GM18951 (cell line): ENCODE measurements at regions of chr14 and their contacts with region 1.

Region 1: GRCh38 chr14:80845856-80846255 is 95.7 kb downstream of the CEP128 start:
- POLR2A ChIP-seq: no peak

Region 2: GRCh38 chr14:80055667-80056496 is 790.0 kb before region 1 on chr14:
- in situ Hi-C with region 1: loop called (anchors 25 kb)
- POLR2A ChIP-seq: no peak

Region 3: DNA sequence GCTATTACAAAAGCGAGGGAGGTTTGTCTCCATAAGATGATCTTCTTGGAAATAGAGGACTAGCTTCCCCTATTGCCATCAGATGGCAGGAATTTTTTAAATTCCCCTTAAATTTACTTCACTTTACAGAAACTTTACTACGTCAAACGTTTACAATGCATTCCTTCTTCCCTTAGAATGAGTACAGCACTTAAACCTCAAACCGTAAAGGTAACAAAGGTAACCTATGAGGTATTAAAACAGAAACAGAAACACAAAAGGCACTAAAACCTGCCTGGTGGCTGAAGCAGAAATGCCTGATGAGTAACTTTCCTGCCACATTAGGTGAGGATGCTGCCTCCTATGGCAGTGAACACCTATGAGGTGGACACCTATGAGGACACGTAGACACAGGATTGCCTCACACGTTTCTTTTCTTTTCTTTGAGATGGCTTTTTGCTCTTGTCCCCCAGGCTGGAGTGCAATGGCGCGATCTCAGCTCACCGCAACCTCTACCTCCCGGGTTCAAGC is 659.5 kb before region 1 on chr14:
- in situ Hi-C with region 1: loop called (anchors 25 kb)
- POLR2A ChIP-seq: no peak